Sigmoid colon (tissue), 7 donors: ENCODE measurements at regions of chr19 and their contacts with region 1.

Region 1: DNA sequence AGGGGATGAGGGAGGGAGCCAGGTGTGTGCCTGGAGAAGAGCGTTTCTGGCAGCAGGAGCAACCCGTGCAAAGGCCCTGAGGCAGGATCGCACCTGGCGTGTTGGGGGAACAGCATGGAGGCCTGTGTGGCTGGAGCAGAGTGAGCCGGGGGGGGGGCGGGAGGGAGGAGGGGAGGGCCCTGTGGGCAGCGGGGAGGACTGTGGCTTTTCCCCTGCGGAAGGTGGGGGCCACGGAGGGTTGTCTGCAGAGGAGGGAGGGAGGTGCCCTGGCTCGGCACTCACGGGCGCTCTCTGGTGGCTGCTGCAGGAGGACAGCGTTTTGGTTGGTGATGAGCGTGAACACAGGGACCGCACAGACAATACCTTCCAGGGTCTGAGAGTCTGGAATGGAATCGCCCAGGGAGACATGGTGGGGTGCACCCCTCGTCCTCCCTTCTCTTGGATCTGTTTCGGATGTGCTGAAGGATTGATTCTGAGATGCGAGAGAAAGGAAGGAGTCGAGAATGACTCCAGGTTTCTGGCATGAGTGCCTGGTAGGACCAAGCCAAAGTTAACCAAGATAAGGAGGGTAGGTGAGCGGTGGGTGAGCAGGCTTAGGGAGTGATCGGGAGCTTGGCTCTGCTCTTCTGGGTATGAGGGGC is 6.5 kb downstream of the RAB11B start:
- DNase-seq: peak; percentile 86
- H3K4me3 ChIP-seq: no peak overlapping the region
- H3K27ac ChIP-seq: peak overlapping the region in 2 of 4 donors; percentile 28 to 100
- H3K4me1 ChIP-seq: peaks cover 0 to 60% (median 55%) of the 10 kb centered on the region in 4 donors
- H3K27me3 ChIP-seq: no peaks in the 10 kb centered on the region
- CTCF ChIP-seq: peak; percentile 30 to 53 (median 39)
- EP300 ChIP-seq: no peak
- POLR2A ChIP-seq: no peak

Region 2: DNA sequence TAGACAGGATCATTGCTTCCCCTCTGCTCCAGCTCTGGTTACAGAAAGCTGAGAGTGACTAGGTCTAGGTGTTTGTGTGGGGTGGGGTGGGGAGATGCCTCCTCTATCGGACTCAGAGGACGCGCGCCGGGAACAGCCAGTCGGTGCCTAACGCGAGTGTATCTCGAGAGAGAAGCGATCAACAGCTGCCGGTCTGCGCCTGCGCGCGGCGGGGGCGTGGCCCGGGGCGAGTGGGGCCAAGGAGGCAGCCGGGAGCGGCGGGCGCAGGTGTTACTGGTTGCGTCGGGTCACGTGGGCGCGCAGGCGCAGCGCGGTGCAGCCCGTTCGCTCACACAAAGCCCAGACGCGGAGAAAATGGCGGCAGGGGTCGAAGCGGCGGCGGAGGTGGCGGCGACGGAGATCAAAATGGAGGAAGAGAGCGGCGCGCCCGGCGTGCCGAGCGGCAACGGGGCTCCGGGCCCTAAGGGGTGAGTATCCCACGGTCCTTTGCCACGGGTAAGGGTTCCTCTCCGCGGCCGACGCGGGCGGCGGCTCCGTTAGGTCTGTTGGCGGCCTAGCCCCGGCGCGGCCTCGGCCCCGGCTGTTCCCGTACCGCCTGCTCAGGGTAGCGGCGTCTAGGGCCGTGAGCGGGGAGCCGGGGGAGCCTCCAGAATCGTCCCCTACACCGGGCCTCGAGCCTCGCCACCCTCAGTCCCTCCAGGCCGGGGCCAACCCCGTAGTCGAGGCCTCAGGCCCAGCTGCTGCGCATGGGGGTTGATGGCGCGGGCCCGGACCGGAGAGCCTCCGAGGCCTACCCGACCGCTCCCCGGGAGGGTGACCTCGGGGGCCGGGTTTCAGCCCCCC is 48.2 kb after region 1 on chr19 and contains the start of gene HNRNPM:
- intact Hi-C with region 1: no loop called
- DNase-seq: peak; percentile 100
- H3K4me3 ChIP-seq: peak within 1 kb of the TSS; percentile 86 to 99 (median 91)
- H3K27ac ChIP-seq: peak within 1 kb of the TSS; percentile 96 to 98 (median 98)
- H3K4me1 ChIP-seq: peaks cover 0 to 45% (median 41%) of the 10 kb centered on the region in 4 donors
- H3K27me3 ChIP-seq: no peaks in the 10 kb centered on the region
- CTCF ChIP-seq: no peak
- EP300 ChIP-seq: no peak
- POLR2A ChIP-seq: peak; percentile 85 to 91
- total RNA-seq, gene HNRNPM: 62.8 to 100 (median 76.1) TPM

Region 3: GRCh38 chr19:8505680-8506401 is 109.2 kb after region 1 on chr19:
- intact Hi-C with region 1: loop called (anchors 5 kb)
- DNase-seq: peak; percentile 85
- H3K4me3 ChIP-seq: peak overlapping the region; percentile 23 to 59 (median 54)
- H3K27ac ChIP-seq: peak overlapping the region in 3 of 4 donors; percentile 8 to 43 (median 8)
- H3K4me1 ChIP-seq: peaks cover 0 to 20% (median 11%) of the 10 kb centered on the region in 4 donors
- H3K27me3 ChIP-seq: no peaks in the 10 kb centered on the region
- CTCF ChIP-seq: peak; percentile 82 to 86 (median 86)
- EP300 ChIP-seq: no peak
- POLR2A ChIP-seq: no peak